AG04449 (cell line): ENCODE measurements at regions of chr12 and their contacts with region 1.

Region 1: DNA sequence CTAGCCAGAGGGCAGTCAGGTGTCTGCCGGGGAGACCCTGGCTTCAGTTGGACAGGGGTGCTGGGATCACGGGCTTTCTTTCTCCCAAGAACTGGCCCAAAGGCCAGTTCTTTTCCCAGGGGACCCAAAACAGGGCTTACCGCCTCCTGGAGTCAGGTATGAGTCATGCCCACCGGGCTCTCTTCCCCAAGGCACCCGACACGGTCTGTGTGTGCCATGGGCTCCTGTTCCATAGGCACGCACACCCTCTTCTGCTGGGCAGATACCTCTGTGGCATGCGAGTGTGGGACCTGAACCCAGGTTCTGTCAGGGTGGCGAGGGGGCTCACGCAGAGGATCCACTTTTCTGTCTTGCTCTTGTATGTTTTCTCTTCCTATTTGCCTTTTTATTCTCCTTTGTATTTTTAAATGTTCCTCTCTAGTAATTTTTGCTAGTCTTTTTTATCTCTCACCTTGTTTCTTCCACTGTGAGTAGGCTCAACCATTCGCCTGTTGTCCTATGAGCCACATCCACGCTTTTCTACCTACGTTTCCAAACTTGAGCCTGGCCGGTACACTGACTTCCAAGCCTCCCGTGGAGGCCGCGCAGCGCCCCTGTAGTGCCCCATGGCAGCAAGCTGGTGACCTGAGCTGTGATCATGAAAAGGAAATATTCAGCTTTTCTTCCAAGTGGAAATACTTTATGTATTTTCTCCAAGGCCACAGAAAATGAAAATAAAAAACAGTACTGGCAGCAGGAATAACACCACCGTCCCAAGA is 362.2 kb downstream of the CACNA1C start:
- DNase-seq: no peak
- H3K4me3 ChIP-seq: no peak overlapping the region
- CTCF ChIP-seq: no peak

Region 2: DNA sequence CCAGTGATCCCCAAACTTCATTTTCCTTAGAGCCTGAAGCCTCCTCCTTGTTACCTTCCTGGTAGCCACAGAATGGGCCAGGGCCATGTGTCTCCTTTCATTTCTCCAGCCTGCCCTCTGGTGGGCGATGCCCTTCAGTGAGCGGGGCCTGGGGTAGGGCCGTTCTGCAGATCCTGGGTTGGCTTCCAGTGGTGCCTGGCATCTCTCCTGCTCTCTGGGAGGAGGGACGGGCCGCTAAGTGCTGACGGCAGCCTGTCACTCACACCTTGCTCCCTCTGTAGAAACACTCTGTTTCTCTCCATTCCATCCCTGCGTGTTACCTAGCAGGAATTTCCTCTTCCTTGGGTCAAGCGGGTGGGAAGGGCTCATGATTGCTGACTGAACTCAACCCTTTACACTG is 130.1 kb before region 1 on chr12:
- CTCF ChIA-PET with region 1: no interaction called
- POLR2A ChIA-PET with region 1: no interaction called
- DNase-seq: no peak
- H3K4me3 ChIP-seq: peak overlapping the region; percentile 24
- CTCF ChIP-seq: peak; percentile 87

Region 3: DNA sequence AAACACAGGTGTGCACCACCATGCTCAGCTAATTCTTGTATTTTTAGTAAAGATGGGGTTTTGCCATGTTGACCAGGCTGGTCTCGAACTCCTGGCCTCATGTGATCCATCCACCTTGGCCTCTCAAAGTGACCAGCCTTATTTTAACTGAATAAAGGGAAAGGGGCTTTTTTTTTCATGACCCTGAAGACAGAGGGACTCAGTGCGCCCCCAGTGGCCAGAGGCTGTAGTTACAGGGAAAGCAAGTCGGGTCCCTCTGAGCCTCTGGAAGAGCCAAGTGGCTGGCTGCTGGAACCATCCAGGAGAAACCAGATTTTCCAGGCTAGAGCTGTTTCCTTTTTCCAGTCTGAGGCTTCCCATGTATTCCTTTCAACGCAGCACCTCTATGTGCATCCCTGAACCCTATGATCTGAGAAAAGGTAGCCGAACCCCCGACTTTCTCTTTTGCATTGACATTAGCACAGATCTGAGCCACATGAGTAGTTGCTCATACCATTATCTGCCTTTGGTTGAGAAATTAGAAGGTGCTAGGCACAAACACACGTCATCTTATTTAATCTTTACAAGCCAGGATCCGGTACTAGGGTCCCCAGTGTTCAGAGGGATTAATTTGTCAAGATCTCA is 19.5 kb before region 1 on chr12:
- CTCF ChIA-PET with region 1: interaction called, 48 read pairs
- POLR2A ChIA-PET with region 1: no interaction called
- DNase-seq: no peak
- H3K4me3 ChIP-seq: no peak overlapping the region
- CTCF ChIP-seq: peak; percentile 65

Region 4: GRCh38 chr12:2640705-2641104 is 225.7 kb after region 1 on chr12:
- CTCF ChIA-PET with region 1: no interaction called
- POLR2A ChIA-PET with region 1: no interaction called
- DNase-seq: peak; percentile 91
- H3K4me3 ChIP-seq: no peak overlapping the region
- CTCF ChIP-seq: no peak